ENCODE measurements at regions of chr4 and their contacts with region 1.

Region 1: GRCh38 chr4:125235971-125236370 is 78.8 kb upstream of the FAT4 start:
- DNase-seq: no peak
- H3K4me3 ChIP-seq: no peak overlapping the region
- H3K27ac ChIP-seq: no peak overlapping the region
- H3K4me1 ChIP-seq: no peaks in the 10 kb centered on the region
- H3K27me3 ChIP-seq: no peaks in the 10 kb centered on the region
- CTCF ChIP-seq: no peak
- EP300 ChIP-seq: no peak
- POLR2A ChIP-seq: no peak

Region 2: DNA sequence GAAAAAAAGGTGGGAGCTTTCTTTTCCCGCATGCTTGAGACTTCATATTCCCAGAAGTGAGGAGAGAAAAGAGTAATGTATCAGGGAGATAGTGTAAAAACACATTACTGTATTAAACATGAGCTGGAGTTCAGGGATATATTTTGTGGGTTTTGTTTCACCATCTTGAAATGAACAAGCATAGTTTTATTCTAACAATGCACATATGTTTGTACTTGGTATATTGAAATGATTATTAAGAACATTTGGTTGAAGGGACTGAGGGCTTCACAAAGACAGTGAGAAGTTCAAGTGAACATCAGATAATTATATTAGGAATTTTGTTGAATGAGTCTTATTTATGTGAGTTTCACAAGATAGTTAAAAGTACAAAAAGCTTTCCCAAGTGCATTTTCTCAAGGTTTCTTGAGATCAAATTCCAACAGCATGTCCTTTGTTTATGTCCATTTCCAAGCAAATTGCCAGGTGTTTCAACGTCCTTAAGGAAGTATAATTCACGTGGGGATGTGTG is 892.3 kb before region 1 on chr4:
- intact Hi-C with region 1: loop called in 1 of 4 experiments (anchors 10 kb)
- DNase-seq: no peak
- H3K4me3 ChIP-seq: no peak overlapping the region
- H3K27ac ChIP-seq: no peak overlapping the region
- H3K4me1 ChIP-seq: no peaks in the 10 kb centered on the region
- H3K27me3 ChIP-seq: no peaks in the 10 kb centered on the region
- CTCF ChIP-seq: no peak
- EP300 ChIP-seq: no peak
- POLR2A ChIP-seq: no peak

Region 3: GRCh38 chr4:124777007-124777406 is 459.0 kb before region 1 on chr4:
- intact Hi-C with region 1: loop called in 1 of 4 experiments (anchors 10 kb)
- DNase-seq: no peak
- H3K4me3 ChIP-seq: no peak overlapping the region
- H3K27ac ChIP-seq: no peak overlapping the region
- H3K4me1 ChIP-seq: no peaks in the 10 kb centered on the region
- H3K27me3 ChIP-seq: no peaks in the 10 kb centered on the region
- CTCF ChIP-seq: no peak
- EP300 ChIP-seq: no peak
- POLR2A ChIP-seq: no peak

Region 4: DNA sequence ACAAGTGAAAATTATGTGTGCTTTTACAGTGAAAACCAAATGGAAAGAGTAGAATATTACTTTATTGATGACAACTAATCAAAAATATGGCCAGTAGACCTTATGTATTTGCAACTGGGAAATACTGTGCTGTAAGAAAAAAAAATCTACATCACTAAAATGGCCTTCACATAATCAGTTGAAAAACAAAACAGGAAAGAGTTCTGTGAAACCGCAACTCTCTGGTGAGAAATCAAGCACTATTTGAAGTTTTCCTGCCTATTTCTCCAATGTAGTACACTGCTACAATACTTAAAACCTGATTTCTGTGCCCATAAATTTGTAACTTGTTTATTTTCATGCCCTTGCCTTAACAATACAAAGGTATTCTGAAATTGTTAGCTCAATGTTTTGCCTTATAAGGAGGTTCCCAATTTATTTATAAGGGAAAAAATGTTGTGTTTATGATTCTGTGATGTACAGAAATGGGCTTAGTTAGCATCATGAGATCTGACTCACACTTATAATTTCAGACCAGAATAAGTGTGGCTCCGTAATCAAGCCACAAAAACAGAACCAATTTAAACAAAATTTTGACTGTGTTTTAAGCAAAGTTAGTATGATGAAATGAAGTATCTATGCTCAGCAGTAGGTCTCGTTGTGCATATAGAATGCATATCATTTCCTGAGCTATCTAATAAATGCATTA is 225.8 kb after region 1 on chr4:
- intact Hi-C with region 1: no loop called
- DNase-seq: no peak
- H3K4me3 ChIP-seq: no peak overlapping the region
- H3K27ac ChIP-seq: no peak overlapping the region
- H3K4me1 ChIP-seq: no peaks in the 10 kb centered on the region
- H3K27me3 ChIP-seq: no peaks in the 10 kb centered on the region
- CTCF ChIP-seq: no peak
- EP300 ChIP-seq: no peak
- POLR2A ChIP-seq: no peak